H1 (cell line): ENCODE measurements at regions of chr3 and their contacts with region 1.

Region 1: DNA sequence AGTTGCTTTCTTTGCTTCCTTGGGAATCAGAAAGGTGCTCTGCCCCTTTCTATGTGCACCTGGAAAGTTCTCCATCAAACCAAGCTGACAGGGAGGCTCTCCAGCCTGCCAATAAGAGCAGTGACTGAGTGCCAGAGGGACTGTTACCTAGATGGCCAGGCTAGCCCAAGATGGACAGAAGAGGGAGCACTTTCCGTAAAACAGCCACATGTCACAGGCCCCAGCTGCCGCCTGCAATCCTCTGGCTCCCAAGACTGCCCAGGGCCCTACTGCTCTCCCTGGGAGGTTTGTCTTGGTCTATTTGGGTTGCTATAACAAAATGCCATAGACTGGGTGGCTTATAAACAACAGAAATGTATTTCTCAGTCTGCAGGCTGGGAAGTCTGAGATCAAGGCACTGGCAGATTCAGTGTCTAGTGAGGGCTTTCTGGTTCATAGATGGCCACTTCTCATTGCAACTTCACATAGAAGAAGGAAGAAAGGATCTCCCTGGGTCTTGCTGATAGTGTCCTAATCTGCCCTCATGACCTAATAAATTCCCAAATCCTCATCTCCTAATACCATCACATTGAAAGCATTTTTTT is 72.3 kb downstream of the TAMM41 start:
- DNase-seq: peak; percentile 36 to 71
- H3K4me3 ChIP-seq: no peak overlapping the region
- H3K27ac ChIP-seq: no peak overlapping the region
- H3K4me1 ChIP-seq: peaks cover 4 to 13% (median 6%) of the 10 kb centered on the region in 4 experiments; a peak in 6 of 7 replicates
- H3K27me3 ChIP-seq: peaks cover 0 to 2% (median 0%) of the 10 kb centered on the region in 4 experiments; a peak in 2 of 7 replicates
- CTCF ChIP-seq: peak; percentile 70 to 85 (median 77)
- EP300 ChIP-seq: no peak
- POLR2A ChIP-seq: no peak
- RAD21 ChIP-seq: peak; percentile 67 to 75

Region 2: DNA sequence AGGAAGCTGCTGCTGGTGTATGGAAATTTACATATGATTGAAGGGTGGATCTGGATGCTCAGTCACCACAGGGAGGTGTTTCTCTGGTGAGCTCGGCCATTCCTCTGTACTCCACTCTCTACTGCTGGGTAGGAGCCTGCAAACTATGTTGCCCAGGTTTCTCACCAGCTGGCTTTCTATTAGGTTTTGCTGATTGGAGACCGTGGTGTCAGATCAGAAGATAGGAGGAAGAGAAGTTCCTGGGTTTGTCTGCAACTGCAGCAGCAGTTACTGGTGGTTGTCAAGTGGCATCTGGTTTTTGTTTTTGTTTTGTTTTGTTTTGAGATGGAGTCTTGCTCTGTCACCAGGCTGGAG is 10.6 kb after region 1 on chr3:
- CTCF ChIA-PET with region 1: interaction called, 20 read pairs
- POLR2A ChIA-PET with region 1: interaction called, 3 read pairs
- DNase-seq: no peak
- H3K4me3 ChIP-seq: no peak overlapping the region
- H3K27ac ChIP-seq: no peak overlapping the region
- H3K4me1 ChIP-seq: no peaks in the 10 kb centered on the region
- H3K27me3 ChIP-seq: no peaks in the 10 kb centered on the region
- CTCF ChIP-seq: no peak
- EP300 ChIP-seq: no peak
- POLR2A ChIP-seq: no peak
- RAD21 ChIP-seq: no peak

Region 3: DNA sequence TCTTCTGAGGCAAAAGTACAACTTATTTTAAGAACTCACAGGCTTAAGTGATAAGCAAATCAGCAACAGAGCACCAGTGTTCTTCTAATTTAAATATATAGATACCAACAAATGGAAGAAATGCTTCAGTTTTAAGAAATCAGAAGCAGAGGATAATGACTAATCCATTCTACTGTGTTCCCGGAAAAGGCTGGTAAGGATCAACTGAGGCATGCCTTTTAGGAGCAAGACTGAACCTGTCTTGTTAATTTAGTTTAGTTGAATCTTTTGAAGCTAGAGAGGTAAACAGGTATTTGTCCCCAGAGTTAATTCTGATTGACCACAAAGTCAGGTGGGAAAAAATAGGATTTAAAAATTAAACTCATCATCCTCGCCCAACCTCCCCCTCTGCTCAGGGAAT is 20.5 kb after region 1 on chr3:
- CTCF ChIA-PET with region 1: interaction called, 10 read pairs
- POLR2A ChIA-PET with region 1: interaction called, 4 read pairs
- DNase-seq: no peak
- H3K4me3 ChIP-seq: no peak overlapping the region
- H3K27ac ChIP-seq: no peak overlapping the region
- H3K4me1 ChIP-seq: peaks cover 0 to 5% (median 0%) of the 10 kb centered on the region in 4 experiments; a peak in 2 of 7 replicates
- H3K27me3 ChIP-seq: no peaks in the 10 kb centered on the region
- CTCF ChIP-seq: no peak
- EP300 ChIP-seq: no peak
- POLR2A ChIP-seq: no peak
- RAD21 ChIP-seq: no peak

Region 4: GRCh38 chr3:11803977-11804892 is 29.8 kb after region 1 on chr3:
- CTCF ChIA-PET with region 1: interaction called, 14 read pairs
- POLR2A ChIA-PET with region 1: no interaction called
- DNase-seq: no peak
- H3K4me3 ChIP-seq: no peak overlapping the region
- H3K27ac ChIP-seq: no peak overlapping the region
- H3K4me1 ChIP-seq: no peaks in the 10 kb centered on the region
- H3K27me3 ChIP-seq: no peaks in the 10 kb centered on the region
- CTCF ChIP-seq: peak; percentile 57 to 88 (median 76)
- EP300 ChIP-seq: no peak
- POLR2A ChIP-seq: no peak
- RAD21 ChIP-seq: peak; percentile 74 to 80